PC-9 (cell line): ENCODE measurements at regions of chr3 and their contacts with region 1.

Region 1: GRCh38 chr3:158539414-158540014 is 31.5 kb upstream of the MLF1 start:
- DNase-seq: peak in 1 of 2 experiments; percentile 12
- H3K4me3 ChIP-seq: no peak overlapping the region
- H3K27ac ChIP-seq: no peak overlapping the region
- H3K4me1 ChIP-seq: no peaks in the 10 kb centered on the region
- H3K27me3 ChIP-seq: no peaks in the 10 kb centered on the region
- CTCF ChIP-seq: peak; percentile 78

Region 2: GRCh38 chr3:157174649-157175498 is 1364.6 kb before region 1 on chr3:
- CTCF ChIA-PET with region 1: no interaction called
- POLR2A ChIA-PET with region 1: no interaction called
- intact Hi-C with region 1: loop called (anchors 10 kb)
- DNase-seq: peak; percentile 99
- H3K4me3 ChIP-seq: peak overlapping the region; percentile 71
- H3K27ac ChIP-seq: peak overlapping the region; percentile 94
- H3K4me1 ChIP-seq: peaks cover 22% of the 10 kb centered on the region
- H3K27me3 ChIP-seq: no peaks in the 10 kb centered on the region
- CTCF ChIP-seq: no peak

Region 3: DNA sequence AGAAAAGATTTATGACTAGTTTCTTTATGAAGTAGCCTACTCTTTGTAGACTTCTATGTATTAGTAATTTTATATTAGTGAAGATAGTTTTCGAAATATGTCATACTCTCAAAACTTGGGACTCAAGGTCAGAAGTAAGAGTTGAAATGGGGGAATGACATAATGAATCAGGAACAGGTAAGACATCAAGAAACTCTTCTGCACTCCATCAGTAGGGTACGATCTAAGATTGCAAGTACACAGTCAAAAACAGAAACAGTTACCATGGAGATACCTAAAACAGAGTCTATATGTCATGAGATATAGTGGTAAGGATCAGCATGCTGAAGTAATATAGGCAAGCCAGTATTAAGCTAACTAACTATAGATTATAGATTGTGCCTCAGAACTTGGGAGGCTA is 155.5 kb before region 1 on chr3:
- CTCF ChIA-PET with region 1: no interaction called
- POLR2A ChIA-PET with region 1: no interaction called
- intact Hi-C with region 1: no loop called
- DNase-seq: no peak
- H3K4me3 ChIP-seq: no peak overlapping the region
- H3K27ac ChIP-seq: no peak overlapping the region
- H3K4me1 ChIP-seq: no peaks in the 10 kb centered on the region
- H3K27me3 ChIP-seq: no peaks in the 10 kb centered on the region
- CTCF ChIP-seq: no peak

Region 4: GRCh38 chr3:158465074-158465473 is 74.4 kb before region 1 on chr3:
- CTCF ChIA-PET with region 1: no interaction called
- POLR2A ChIA-PET with region 1: no interaction called
- intact Hi-C with region 1: no loop called
- DNase-seq: no peak
- H3K4me3 ChIP-seq: no peak overlapping the region
- H3K27ac ChIP-seq: no peak overlapping the region
- H3K4me1 ChIP-seq: no peaks in the 10 kb centered on the region
- H3K27me3 ChIP-seq: no peaks in the 10 kb centered on the region
- CTCF ChIP-seq: no peak

Region 5: GRCh38 chr3:158722108-158722507 is 182.6 kb after region 1 on chr3:
- CTCF ChIA-PET with region 1: no interaction called
- POLR2A ChIA-PET with region 1: no interaction called
- intact Hi-C with region 1: no loop called
- DNase-seq: peak in 1 of 2 experiments; percentile 22
- H3K4me3 ChIP-seq: no peak overlapping the region
- H3K27ac ChIP-seq: peak overlapping the region; percentile 78
- H3K4me1 ChIP-seq: peaks cover 100% of the 10 kb centered on the region
- H3K27me3 ChIP-seq: no peaks in the 10 kb centered on the region
- CTCF ChIP-seq: no peak